Mammary epithelial cell (primary cell): ENCODE measurements at regions of chr7 and their contacts with region 1.

Region 1: DNA sequence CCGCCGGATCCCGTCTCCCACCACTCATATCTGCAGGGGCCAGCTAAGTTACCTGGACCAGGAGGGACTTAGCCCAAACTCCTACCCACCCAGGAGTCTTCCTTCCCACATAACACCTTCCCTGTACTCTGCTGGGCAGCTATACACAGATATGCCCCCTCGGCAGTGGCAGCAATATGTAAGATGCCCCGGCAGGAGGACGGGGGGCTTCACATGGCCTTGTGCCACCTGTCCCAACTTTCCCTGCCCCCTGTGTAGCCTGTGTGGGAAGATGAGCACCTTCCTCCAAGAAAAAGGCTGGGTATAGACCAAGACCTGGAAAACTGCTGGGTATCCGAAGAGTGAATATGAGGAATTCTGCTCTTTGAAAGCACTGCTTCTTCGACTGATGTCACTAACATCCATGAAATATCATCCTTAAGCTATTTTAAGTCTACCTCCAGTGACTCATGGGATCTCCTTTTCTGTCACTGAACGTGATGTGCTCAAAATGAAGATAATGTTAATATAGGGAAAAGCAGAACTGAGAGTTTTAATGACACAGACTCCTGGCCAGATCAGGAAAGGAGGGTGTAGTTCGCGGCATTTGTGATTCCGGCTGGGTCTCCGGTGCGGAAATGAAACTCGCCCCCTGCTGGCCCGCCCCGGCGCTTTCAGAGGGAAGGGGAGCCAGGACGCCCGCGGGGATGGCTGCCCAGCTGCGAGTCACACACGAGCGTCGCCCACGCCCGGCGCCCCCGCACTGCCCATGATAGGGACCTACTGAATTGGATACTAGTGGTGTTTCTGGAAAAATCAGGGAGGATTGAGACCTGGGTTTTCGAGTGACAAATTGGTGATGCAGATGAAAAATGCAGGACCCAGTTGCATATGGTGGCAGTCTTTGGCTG is 256.9 kb upstream of the NFE2L3 start:
- DNase-seq: peak; percentile 17
- H3K4me3 ChIP-seq: no peak overlapping the region
- H3K27ac ChIP-seq: no peak overlapping the region
- H3K4me1 ChIP-seq: peaks cover 27% of the 10 kb centered on the region
- H3K27me3 ChIP-seq: no peaks in the 10 kb centered on the region
- CTCF ChIP-seq: peak; percentile 46 to 65

Region 2: GRCh38 chr7:25347360-25348066 is 547.6 kb before region 1 on chr7:
- CTCF ChIA-PET with region 1: no interaction called
- dilution Hi-C with region 1: no loop called
- in situ Hi-C with region 1: no loop called
- intact Hi-C with region 1: no loop called
- DNase-seq: no peak
- H3K4me3 ChIP-seq: no peak overlapping the region
- H3K27ac ChIP-seq: no peak overlapping the region
- H3K4me1 ChIP-seq: no peaks in the 10 kb centered on the region
- H3K27me3 ChIP-seq: no peaks in the 10 kb centered on the region
- CTCF ChIP-seq: no peak

Region 3: DNA sequence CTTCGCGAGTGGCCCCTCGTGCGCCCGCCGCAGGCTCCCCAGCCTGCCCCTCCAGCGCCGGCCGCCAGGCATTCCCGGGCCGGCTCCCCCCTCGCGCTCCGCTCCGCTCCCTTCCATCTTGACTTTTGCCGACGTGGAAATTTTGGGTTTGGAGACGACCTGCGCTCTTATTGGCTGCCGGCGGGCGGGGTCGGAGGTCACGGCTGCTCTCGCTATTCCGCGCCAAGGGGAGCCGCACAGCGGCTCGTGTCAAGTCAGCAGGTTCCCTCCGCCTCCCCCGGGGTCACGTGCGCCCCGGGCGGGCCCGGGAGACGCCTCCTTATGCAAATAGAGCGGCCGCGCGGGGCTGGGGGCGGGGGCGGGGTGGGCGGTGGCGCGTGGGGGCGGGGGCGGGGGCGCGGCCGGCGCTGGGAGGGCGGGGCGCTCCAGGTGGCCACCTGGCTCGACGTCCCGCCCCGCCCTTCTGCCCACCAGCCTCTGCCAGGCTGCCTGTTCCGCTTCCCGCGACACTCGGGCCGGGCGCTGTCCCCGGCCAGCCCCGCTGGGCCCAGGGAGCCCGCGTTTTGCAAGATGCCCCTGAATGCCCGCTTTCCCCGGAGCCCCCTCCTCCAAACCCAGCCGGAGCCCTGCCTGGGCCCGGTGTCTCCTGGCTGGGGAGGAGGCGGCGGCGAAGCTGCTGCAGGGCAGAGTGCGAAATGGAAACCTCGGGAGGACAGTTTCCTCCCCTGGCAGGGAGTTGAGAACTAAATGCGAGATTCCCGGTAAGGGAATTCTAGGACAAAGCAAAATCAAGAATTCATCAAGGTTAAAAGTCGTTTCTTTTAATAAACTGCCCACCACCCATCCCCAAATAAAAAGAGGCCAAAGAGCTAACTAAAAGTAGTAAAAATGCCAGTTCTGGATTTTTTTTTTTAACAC is 56.1 kb after region 1 on chr7:
- CTCF ChIA-PET with region 1: no interaction called
- dilution Hi-C with region 1: no loop called
- in situ Hi-C with region 1: no loop called
- intact Hi-C with region 1: loop called (anchors 1 kb)
- DNase-seq: peak; percentile 89
- H3K4me3 ChIP-seq: peak overlapping the region; percentile 63 to 78 (median 77)
- H3K27ac ChIP-seq: peak overlapping the region; percentile 65
- H3K4me1 ChIP-seq: peaks cover 16% of the 10 kb centered on the region
- H3K27me3 ChIP-seq: no peaks in the 10 kb centered on the region
- CTCF ChIP-seq: no peak

Region 4: DNA sequence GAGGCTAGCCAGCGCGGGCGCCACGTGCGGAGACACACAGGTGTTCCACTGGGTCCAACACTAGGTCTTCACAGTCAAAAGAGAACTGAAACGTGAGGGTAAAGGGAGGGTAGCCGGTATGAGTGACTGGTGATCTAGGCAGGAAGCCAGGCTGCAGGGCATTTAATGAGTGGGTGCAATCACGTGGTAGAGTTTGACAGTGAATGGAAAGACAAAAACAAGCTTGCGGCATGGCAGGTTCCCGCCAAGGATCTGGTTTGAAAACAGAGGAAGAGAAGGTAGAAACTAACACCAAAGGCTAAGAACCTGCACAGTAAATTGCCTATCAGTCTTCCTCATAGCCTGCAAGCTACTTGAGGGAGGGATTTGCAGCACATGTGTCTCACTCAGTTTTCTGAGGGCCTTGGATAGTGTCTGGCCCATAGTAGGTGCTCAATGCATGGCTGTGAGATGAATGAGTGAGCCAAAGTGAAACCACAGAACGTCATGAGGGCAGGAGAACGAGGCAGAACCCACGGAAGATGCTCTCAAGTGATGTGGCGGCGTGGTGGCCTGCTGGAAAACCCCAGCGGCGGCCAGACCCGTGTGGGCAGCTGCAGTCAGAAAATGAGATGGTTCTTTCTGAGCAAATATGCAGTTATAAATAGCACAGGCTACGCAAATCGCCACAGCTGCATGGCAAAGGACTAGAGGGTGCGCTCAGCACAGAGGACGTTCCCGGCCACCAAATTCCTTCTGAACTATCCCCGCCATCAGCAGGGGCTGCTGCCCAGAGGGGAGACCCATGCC is 73.3 kb after region 1 on chr7:
- CTCF ChIA-PET with region 1: no interaction called
- dilution Hi-C with region 1: no loop called
- in situ Hi-C with region 1: no loop called
- intact Hi-C with region 1: no loop called
- DNase-seq: no peak
- H3K4me3 ChIP-seq: no peak overlapping the region
- H3K27ac ChIP-seq: no peak overlapping the region
- H3K4me1 ChIP-seq: no peaks in the 10 kb centered on the region
- H3K27me3 ChIP-seq: peaks cover 1% of the 10 kb centered on the region
- CTCF ChIP-seq: no peak

Region 5: DNA sequence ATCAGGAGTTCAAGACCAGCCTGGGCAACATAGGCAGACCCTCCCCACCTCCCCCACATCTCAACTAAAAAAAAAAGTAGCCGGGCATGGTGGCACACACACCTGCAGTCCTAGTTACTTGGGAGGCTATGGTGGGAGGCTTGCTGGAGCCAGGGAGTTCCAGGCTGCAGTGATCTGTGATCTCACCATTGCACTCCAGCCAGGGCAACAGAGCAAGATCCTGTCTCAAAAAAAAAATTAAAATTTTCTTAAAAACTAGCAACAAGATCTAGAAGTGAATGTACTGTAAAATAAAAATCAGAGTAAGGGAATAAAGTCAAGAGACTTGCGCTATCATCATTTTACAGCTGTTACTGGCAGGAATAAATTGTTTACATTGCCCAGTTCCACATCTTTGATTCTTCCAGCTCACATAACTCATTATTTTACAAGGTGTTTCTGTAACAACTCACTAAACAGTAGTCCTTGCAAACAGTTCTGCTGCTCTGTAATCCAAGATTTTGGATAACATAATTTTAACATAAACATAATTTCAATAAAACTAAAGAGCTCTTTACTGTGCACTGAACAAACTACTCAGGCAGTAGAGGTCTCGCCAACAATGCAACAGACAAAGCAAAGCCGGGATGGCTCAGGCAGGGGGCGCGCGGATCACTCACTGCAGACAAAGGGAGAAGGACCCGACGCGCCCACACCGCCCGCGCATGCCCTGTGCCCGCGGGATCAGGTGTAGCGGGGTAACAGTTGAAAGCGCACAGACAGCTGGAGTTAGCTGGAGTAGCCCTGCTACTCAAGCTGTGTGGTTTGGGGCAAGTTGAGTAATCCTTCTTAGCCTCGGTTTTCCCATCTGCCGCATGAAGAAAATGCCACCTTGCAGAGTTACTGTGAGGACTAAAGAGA is 183.5 kb after region 1 on chr7:
- CTCF ChIA-PET with region 1: no interaction called
- dilution Hi-C with region 1: no loop called
- in situ Hi-C with region 1: loop called in 1 of 2 experiments (anchors 10 kb)
- intact Hi-C with region 1: no loop called
- DNase-seq: peak; percentile 60
- H3K4me3 ChIP-seq: no peak overlapping the region
- H3K27ac ChIP-seq: no peak overlapping the region
- H3K4me1 ChIP-seq: peaks cover 13% of the 10 kb centered on the region
- H3K27me3 ChIP-seq: no peaks in the 10 kb centered on the region
- CTCF ChIP-seq: peak; percentile 10 to 64

Region 6: DNA sequence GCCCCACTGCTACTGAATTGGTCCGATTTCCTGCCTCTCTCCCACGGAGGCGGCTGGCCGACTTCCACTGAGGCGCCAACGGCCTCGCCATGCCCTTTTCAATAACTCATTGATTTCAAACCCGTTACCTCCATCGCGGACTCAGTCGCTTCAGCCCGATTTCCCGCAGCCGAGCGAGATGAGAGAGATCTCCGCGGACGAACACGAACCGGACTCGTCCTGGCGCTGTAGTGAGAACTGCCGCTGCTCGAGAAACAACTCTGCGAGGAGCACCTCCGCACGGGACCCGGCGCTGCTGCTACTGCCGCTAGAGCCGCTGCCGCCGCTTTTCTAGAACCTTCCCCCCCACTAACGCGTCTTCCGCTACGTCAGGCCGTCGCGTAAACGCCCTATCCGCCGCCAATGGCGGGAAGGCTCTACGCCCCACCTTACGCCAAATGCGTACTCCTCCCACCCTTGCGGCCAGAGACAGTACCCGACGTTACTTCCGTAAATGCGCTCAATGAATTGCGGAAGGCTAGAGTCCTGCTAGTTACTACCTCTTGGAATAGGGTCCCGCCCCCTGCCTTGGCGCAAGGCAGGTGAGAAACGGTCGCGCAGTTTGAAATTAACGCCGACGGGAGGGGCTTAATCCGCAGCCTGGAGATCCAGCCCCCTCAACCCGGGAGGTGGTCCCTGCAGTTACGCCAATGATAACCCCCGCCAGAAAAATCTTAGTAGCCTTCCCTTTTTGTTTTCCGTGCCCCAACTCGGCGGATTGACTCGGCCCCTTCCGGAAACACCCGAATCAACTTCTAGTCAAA is 305.5 kb after region 1 on chr7 and contains the start of gene HNRNPA2B1:
- CTCF ChIA-PET with region 1: interaction called, 7 read pairs
- dilution Hi-C with region 1: no loop called
- in situ Hi-C with region 1: loop called in 1 of 2 experiments (anchors 10 kb)
- intact Hi-C with region 1: loop called (anchors 1 kb)
- DNase-seq: peak; percentile 97
- H3K4me3 ChIP-seq: peak within 1 kb of the TSS; percentile 99 to 100 (median 100)
- H3K27ac ChIP-seq: peak within 1 kb of the TSS; percentile 93
- H3K4me1 ChIP-seq: peaks cover 28% of the 10 kb centered on the region
- H3K27me3 ChIP-seq: no peaks in the 10 kb centered on the region
- CTCF ChIP-seq: no peak
- total RNA-seq, gene HNRNPA2B1: 62.0 to 506 TPM

Region 7: GRCh38 chr7:26500749-26501352 is 605.7 kb after region 1 on chr7:
- CTCF ChIA-PET with region 1: no interaction called
- dilution Hi-C with region 1: no loop called
- in situ Hi-C with region 1: no loop called
- intact Hi-C with region 1: loop called (anchors 5 kb)
- DNase-seq: peak; percentile 27
- H3K4me3 ChIP-seq: no peak overlapping the region
- H3K27ac ChIP-seq: no peak overlapping the region
- H3K4me1 ChIP-seq: no peaks in the 10 kb centered on the region
- H3K27me3 ChIP-seq: no peaks in the 10 kb centered on the region
- CTCF ChIP-seq: peak; percentile 37 to 65

Region 8: DNA sequence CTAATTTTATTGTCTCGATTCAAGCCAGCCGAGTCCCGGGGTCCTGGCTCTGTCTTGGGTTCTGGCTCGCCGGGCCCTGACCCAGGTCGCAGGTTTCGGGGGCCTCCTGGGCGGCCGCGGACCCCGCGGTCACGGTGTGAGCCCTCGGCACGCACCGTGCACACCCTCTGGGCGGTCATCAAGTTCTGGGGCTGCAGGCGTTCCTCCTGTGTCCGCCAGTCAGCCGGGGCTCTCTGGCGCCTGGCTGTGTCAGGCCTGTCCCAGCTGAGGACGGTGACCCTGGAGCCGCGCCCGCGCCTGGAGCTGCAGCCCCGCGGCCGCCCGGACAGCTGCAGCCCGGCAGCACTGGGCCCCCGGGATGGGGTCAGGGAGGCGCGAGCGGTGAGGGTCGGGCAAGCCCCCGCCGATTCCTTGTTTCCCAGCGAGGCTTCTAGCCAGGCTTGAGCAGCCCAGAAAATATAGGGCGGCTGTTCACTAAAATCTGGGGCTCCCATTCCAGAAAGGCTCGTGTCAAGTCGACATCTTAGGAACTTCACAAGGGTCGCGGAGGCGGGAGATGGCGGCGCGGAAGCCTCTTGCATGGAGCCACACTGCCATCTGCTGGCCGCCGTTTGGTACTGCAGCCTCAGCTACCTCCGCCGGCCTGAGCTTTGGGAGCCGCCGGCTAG is 1265.5 kb after region 1 on chr7:
- CTCF ChIA-PET with region 1: no interaction called
- dilution Hi-C with region 1: no loop called
- in situ Hi-C with region 1: loop called in 1 of 2 experiments (anchors 25 kb)
- intact Hi-C with region 1: loop called (anchors 2 kb)
- DNase-seq: peak; percentile 69
- H3K4me3 ChIP-seq: peak overlapping the region; percentile 48 to 72 (median 56)
- H3K27ac ChIP-seq: peak overlapping the region; percentile 53
- H3K4me1 ChIP-seq: peaks cover 61% of the 10 kb centered on the region
- H3K27me3 ChIP-seq: peaks cover 8% of the 10 kb centered on the region
- CTCF ChIP-seq: peak; percentile 78 to 98